SK-N-SH (cell line): ENCODE measurements at regions of chr19 and their contacts with region 1.

Region 1: GRCh38 chr19:12965017-12965811 is 4.2 kb upstream of the DAND5 start:
- DNase-seq: peak; percentile 89
- H3K4me3 ChIP-seq: peak overlapping the region; percentile 48 to 63
- H3K27ac ChIP-seq: peak overlapping the region; percentile 59 to 75
- H3K4me1 ChIP-seq: peaks cover 6 to 14% of the 10 kb centered on the region in 2 experiments; a peak in 3 of 4 replicates
- H3K27me3 ChIP-seq: no peaks in the 10 kb centered on the region
- CTCF ChIP-seq: peak; percentile 78
- EP300 ChIP-seq: no peak
- RAD21 ChIP-seq: peak; percentile 79

Region 2: DNA sequence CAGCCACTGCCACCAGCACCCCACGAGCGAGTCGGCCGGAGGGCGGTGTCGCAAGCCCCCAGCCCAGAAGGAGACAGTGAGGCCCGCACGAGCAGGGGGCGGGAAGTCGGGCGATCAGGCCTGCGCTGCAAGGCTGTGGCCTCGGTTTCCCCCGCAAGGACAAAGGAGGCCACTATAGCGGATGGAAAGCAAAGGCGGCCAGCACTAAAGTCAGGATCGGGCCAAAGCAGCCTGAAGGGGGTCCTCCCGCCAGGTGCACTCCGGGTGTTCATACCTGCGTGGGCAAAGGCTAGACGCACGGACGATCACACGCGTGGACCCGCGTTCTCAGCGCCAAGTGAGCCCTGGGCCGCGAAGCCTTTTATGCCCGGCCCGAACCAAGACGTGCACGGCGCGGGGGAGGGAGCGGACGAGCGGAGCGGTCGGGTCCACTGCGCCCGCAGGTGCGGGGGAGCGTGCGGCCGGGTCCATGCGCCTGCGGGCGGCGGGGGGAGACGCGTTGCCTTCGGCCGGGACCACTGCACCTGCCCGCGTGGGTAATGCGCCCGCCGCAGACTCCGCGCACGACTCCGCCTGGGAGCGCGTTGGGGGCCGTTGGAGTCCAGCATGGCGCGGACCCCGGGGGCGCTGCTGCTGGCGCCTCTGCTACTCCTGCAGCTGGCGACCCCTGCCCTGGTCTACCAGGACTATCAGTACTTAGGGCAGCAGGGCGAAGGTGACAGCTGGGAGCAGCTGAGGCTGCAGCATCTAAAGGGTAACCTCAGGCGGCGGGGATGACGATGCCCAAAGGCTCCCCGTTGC is 163.5 kb before region 1 on chr19 and contains the starts of genes PRDX2 and THSD8:
- CTCF ChIA-PET with region 1: no interaction called
- POLR2A ChIA-PET with region 1: no interaction called
- DNase-seq: peak; percentile 94
- H3K4me3 ChIP-seq: peak within 1 kb of the TSS; percentile 74 to 95
- H3K27ac ChIP-seq: peak within 1 kb of the TSS in 1 of 2 experiments; percentile 74; a peak in 2 of 4 replicates
- H3K4me1 ChIP-seq: peaks cover 4 to 21% of the 10 kb centered on the region in 2 experiments; a peak in 1 of 4 replicates
- H3K27me3 ChIP-seq: no peaks in the 10 kb centered on the region
- CTCF ChIP-seq: no peak; the same call in 1 of the 2 replicates
- EP300 ChIP-seq: peak in 1 of 2 experiments; percentile 47; a peak in 1 of 4 replicates
- RAD21 ChIP-seq: no peak
- polyA plus RNA-seq, gene PRDX2: 215 and 341 TPM in 2 replicates
- polyA plus RNA-seq, gene THSD8: not detected in 2 replicates

Region 3: DNA sequence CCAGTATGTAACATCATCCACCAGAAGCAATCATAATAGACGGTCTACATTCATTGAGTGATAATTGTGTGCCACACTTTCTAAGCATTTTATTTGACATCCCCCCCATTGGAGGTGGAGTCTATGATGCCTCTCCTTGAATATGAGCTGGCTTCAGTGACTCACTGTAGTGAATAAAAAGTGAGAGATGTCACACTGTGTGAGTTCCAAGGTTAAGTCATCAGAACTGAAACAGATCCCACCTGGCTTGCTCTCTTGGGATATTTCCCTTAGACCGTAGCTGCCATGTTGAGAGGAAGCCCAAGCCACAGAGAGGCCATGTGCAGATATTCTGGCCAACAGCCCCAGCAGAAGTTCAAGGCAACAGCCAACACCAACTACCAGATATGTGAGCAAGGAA is 143.5 kb before region 1 on chr19:
- CTCF ChIA-PET with region 1: no interaction called
- POLR2A ChIA-PET with region 1: no interaction called
- DNase-seq: no peak
- H3K4me3 ChIP-seq: no peak overlapping the region
- H3K27ac ChIP-seq: no peak overlapping the region
- H3K4me1 ChIP-seq: no peaks in the 10 kb centered on the region; a peak in 1 of 4 replicates
- H3K27me3 ChIP-seq: no peaks in the 10 kb centered on the region
- CTCF ChIP-seq: no peak
- EP300 ChIP-seq: no peak
- RAD21 ChIP-seq: no peak

Region 4: DNA sequence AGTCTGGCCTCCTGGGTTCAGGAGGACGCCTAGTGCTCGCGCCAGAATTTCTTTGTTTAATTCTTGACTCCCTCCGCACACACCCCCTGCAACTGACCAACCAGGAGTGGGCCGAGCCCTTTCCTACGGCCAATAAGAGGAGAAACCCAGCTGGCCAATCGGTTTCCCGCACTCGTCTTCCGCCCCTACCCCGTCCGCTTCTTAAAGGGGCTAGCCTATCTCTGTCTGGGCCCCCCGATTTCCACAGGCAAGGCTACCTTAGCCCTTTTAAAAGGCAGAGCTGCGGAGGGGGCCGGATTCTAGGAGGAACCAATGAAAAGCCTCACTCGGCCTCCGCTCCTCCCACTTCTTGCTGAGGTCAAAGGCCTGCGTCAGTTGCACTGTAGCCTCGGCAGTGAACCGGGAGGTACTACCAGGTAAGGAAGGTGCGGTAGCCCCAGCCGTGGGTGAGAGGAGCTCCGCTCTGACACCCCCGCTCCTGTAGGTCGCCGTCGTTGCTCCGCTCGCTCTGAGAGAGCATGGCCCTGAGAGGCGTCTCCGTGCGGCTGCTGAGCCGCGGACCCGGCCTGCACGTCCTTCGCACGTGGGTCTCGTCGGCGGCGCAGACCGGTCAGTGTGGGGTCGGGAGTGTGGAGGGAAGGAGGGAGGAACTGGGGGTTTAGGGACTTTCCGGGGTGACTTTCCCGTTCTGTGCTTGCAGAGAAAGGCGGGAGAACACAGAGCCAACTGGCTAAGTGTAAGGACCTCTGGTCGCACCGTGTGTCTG is 74.2 kb before region 1 on chr19 and contains the start of gene GCDH:
- CTCF ChIA-PET with region 1: interaction called, 28 read pairs
- POLR2A ChIA-PET with region 1: interaction called, 4 read pairs
- DNase-seq: peak; percentile 96
- H3K4me3 ChIP-seq: peak within 1 kb of the TSS; percentile 80 to 84
- H3K27ac ChIP-seq: no peak within 1 kb of the TSS
- H3K4me1 ChIP-seq: peaks cover 6 to 8% of the 10 kb centered on the region in 2 experiments; a peak in 2 of 4 replicates
- H3K27me3 ChIP-seq: no peaks in the 10 kb centered on the region; the same call in 1 of the 2 replicates
- CTCF ChIP-seq: no peak
- EP300 ChIP-seq: no peak
- RAD21 ChIP-seq: no peak
- polyA plus RNA-seq, gene GCDH: 29.4 and 36.6 TPM in 2 replicates

Region 5: GRCh38 chr19:12994701-12995595 is 29.7 kb after region 1 on chr19 and contains the start of gene NFIX:
- CTCF ChIA-PET with region 1: interaction called, 14 read pairs
- POLR2A ChIA-PET with region 1: no interaction called
- DNase-seq: peak; percentile 86
- H3K4me3 ChIP-seq: peak within 1 kb of the TSS; percentile 57 to 77
- H3K27ac ChIP-seq: no peak within 1 kb of the TSS; a peak in 1 of 4 replicates
- H3K4me1 ChIP-seq: peaks cover 0 to 17% of the 10 kb centered on the region in 2 experiments; a peak in 1 of 4 replicates
- H3K27me3 ChIP-seq: no peaks in the 10 kb centered on the region
- CTCF ChIP-seq: no peak
- EP300 ChIP-seq: no peak
- RAD21 ChIP-seq: no peak
- polyA plus RNA-seq, gene NFIX: 5.1 and 14.8 TPM in 2 replicates

Region 6: GRCh38 chr19:13033819-13034611 is 68.8 kb after region 1 on chr19:
- CTCF ChIA-PET with region 1: interaction called, 26 read pairs
- POLR2A ChIA-PET with region 1: no interaction called
- DNase-seq: peak; percentile 77
- H3K4me3 ChIP-seq: peak overlapping the region in 1 of 2 experiments; percentile 13; a peak in 1 of 4 replicates
- H3K27ac ChIP-seq: peak overlapping the region in 1 of 2 experiments; percentile 43; a peak in 1 of 4 replicates
- H3K4me1 ChIP-seq: peaks cover 45 to 55% of the 10 kb centered on the region in 2 experiments
- H3K27me3 ChIP-seq: no peaks in the 10 kb centered on the region
- CTCF ChIP-seq: peak; percentile 69
- EP300 ChIP-seq: no peak
- RAD21 ChIP-seq: peak; percentile 63

Region 7: DNA sequence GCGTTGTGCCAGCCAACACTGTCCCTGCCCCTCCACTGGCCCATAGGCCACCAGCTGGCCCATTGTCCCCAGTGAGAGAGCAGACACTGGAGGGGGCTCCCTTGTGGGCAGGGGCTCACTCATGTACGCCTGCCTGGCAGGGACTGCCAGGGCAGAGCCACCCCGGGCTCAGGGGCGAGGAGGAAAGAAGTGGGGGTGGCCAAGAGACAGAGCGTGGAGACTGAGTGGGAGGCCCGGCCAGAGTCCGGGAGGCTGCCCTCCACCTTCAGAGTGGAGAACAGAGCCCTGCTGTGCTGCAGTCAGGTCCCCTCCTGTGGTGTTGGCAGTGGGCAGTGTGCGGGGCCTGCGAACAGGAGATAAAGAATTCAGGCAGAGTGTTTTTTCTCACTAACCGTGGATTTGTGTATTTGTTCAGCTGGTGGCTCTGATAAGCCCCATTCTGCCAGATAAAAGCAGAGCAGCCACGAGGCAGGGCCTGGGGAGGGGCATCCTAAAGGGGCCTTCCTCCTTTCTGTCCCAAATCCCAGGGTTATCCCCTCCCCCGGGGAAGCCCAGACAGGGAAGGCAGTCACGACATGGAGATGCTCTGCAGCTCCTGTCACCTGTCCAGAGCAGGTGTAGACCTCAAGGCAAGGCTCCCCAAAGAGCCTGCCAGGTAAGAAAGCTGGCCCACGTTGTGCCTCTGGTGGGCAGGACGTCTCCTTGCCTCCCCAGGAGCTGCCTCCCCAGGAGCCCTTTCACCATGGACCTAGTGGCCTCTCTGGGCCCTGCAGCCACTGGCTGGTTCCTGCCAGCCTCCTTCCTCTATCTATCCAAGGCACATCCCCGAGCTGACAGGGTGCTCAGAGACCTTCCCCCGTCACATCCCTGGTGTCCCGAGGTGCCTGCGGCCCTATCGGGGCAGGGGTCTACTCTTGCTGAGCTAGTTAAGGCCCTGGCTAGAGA is 104.5 kb after region 1 on chr19:
- CTCF ChIA-PET with region 1: interaction called, 22 read pairs
- POLR2A ChIA-PET with region 1: interaction called, 3 read pairs
- DNase-seq: peak; percentile 76
- H3K4me3 ChIP-seq: no peak overlapping the region
- H3K27ac ChIP-seq: peak overlapping the region in 1 of 2 experiments; percentile 92; a peak in 2 of 4 replicates
- H3K4me1 ChIP-seq: peaks cover 0 to 70% of the 10 kb centered on the region in 2 experiments; a peak in 1 of 4 replicates
- H3K27me3 ChIP-seq: no peaks in the 10 kb centered on the region
- CTCF ChIP-seq: no peak
- EP300 ChIP-seq: peak in 1 of 2 experiments; percentile 50; a peak in 2 of 4 replicates
- RAD21 ChIP-seq: 0 out of 2 replicates have a peak, but pooled peaks have one; percentile 10

Region 8: GRCh38 chr19:13104360-13104847 is 139.2 kb after region 1 on chr19:
- CTCF ChIA-PET with region 1: interaction called, 23 read pairs
- POLR2A ChIA-PET with region 1: interaction called, 3 read pairs
- DNase-seq: peak; percentile 81
- H3K4me3 ChIP-seq: no peak overlapping the region
- H3K27ac ChIP-seq: no peak overlapping the region
- H3K4me1 ChIP-seq: peaks cover 0 to 24% of the 10 kb centered on the region in 2 experiments; a peak in 3 of 4 replicates
- H3K27me3 ChIP-seq: no peaks in the 10 kb centered on the region
- CTCF ChIP-seq: peak; percentile 54
- EP300 ChIP-seq: no peak
- RAD21 ChIP-seq: peak; percentile 32; the same call in 1 of the 2 replicates